Head of caudate nucleus (tissue), 42 donors: ENCODE measurements at regions of chr14 and their contacts with region 1.

Region 1: DNA sequence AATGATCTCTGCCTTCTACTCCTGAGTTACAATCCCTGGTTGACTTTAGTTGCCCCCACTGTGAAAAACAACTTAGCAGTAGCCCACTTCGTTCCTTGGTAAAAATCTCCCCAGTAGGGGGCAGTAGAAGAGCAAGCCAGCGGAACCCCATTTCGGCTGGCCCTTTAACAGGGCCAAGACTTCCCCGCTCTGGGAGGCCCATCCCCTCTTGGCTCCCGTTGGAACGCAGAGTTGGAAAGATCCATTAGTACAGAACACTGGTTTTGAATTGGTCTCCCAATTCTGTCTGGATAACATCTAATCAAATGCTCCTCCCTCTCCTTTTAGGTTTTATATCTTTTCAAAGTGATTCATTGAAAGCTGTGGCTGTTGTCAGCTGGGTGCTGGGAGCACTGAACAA is 1133.3 kb downstream of the BCL11B start:
- DNase-seq: peak in 27 of 42 donors; percentile 13 to 74 (median 39)

Region 2: DNA sequence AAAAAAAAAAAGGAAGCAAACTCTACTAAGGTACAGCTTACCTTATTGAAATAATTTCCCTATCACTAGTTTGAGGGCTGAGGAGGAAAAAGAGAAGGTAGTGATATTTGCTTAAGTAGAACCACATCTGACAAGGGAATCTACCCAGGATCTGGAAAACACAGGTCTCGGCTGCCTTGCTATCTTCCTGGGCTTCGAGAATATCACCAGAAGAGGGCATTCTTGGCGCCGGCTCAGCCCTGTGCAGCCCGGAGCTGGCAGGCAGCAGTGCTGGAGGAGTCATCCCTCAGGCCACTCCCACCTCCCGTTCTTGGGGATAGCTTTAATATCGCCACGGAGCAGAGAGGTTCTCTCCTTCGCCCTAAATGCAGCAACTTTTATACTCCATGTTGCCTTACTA is 160.3 kb before region 1 on chr14:
- intact Hi-C with region 1: loop called (anchors 2 kb)
- DNase-seq: peak; percentile 72 to 96 (median 85)

Region 3: DNA sequence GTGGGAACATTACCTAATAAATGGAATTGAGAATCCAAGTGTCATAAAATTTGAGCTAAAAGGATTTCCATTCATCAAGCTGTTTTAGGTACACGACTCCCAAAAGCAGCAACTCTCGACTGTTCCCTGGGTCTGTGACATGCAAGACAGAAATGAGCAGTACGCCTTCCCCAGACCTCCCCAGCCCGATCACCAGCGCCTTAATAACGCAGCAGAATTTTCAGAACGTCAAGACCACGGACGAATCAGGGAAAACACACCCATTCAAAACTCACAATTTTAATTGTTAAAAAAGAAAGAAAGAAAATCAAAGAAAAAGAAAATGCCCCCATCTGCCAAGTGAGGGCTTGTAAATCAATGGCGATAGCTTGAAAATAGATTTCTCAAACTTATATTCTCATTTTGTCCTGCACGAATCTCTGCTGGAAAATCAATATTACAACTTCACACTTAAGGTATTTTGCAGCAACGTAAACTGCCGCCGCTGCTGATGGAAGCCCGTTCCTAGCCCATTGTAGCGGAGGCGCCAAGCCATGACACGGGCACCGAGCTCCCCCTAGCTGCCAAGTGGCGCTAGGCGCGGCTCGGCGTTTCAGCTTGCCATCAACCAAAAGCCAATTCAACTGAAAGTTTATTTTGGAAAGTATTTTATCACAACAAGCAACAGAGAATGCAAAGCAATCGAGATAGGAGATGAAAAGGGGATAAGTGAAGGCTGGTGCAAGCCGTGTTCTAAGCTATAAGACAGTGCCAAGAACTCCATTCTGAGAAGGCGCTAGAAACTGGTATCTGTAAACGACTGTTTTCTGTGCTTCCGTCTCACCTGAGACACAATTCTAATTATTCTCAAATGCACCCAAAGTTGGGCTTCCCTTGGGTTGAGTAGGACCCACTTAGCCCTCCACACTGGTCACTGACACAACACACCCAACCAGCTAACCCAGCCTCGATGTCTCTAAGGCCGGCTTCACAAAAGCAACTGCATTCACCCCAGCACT is 1127.8 kb after region 1 on chr14:
- intact Hi-C with region 1: loop called (anchors 10 kb)
- DNase-seq: peak; percentile 75 to 93 (median 87)